ENCODE measurements at regions of chr14 and their contacts with region 1.

Region 1: GRCh38 chr14:96796851-96797581 is at the start of gene VRK1:
- DNase-seq: peak; percentile 90
- ATAC-seq: peak; percentile 100
- H3K4me3 ChIP-seq: peak within 1 kb of the TSS; percentile 73 to 90 (median 84)
- H3K27ac ChIP-seq: peak within 1 kb of the TSS; percentile 74
- H3K4me1 ChIP-seq: peaks cover 34% of the 10 kb centered on the region
- H3K27me3 ChIP-seq: no peaks in the 10 kb centered on the region; a peak in 1 of 5 replicates
- CTCF ChIP-seq: no peak
- EP300 ChIP-seq: peak in 1 of 2 experiments; percentile 17; a peak in 1 of 4 replicates
- POLR2A ChIP-seq: peak; percentile 45 to 63; a peak in 2 of 4 replicates
- RAD21 ChIP-seq: no peak; the same call in 1 of the 2 replicates
- total RNA-seq, gene VRK1: 51.3 and 60.9 TPM in 2 replicates

Region 2: GRCh38 chr14:96741151-96741977 is 55.7 kb before region 1 on chr14:
- CTCF ChIA-PET with region 1: no interaction called
- POLR2A ChIA-PET with region 1: no interaction called
- in situ Hi-C with region 1: no loop called
- intact Hi-C with region 1: no loop called
- DNase-seq: no peak
- ATAC-seq: peak; percentile 85
- H3K4me3 ChIP-seq: peak overlapping the region; percentile 43 to 62 (median 56); a peak in 5 of 6 replicates
- H3K27ac ChIP-seq: no peak overlapping the region
- H3K4me1 ChIP-seq: peaks cover 5% of the 10 kb centered on the region; the same call in 1 of the 2 replicates
- H3K27me3 ChIP-seq: peaks cover 2 to 85% of the 10 kb centered on the region in 2 experiments
- CTCF ChIP-seq: peak; percentile 95
- EP300 ChIP-seq: no peak
- POLR2A ChIP-seq: no peak
- RAD21 ChIP-seq: peak; percentile 86

Region 3: GRCh38 chr14:96852823-96853422 is 55.9 kb after region 1 on chr14:
- CTCF ChIA-PET with region 1: no interaction called
- POLR2A ChIA-PET with region 1: no interaction called
- in situ Hi-C with region 1: no loop called
- intact Hi-C with region 1: loop called (anchors 1 kb)
- DNase-seq: peak; percentile 18
- ATAC-seq: peak; percentile 79
- H3K4me3 ChIP-seq: no peak overlapping the region
- H3K27ac ChIP-seq: no peak overlapping the region
- H3K4me1 ChIP-seq: peaks cover 8% of the 10 kb centered on the region; the same call in 1 of the 2 replicates
- H3K27me3 ChIP-seq: no peaks in the 10 kb centered on the region
- CTCF ChIP-seq: peak; percentile 51
- EP300 ChIP-seq: no peak
- POLR2A ChIP-seq: no peak
- RAD21 ChIP-seq: peak; percentile 33; the same call in 1 of the 2 replicates

Region 4: GRCh38 chr14:97177015-97177414 is 380.0 kb after region 1 on chr14:
- CTCF ChIA-PET with region 1: no interaction called
- POLR2A ChIA-PET with region 1: no interaction called
- in situ Hi-C with region 1: no loop called
- intact Hi-C with region 1: no loop called
- DNase-seq: peak; percentile 18
- ATAC-seq: peak; percentile 67
- H3K4me3 ChIP-seq: no peak overlapping the region
- H3K27ac ChIP-seq: no peak overlapping the region
- H3K4me1 ChIP-seq: no peaks in the 10 kb centered on the region
- H3K27me3 ChIP-seq: peaks cover 0 to 4% of the 10 kb centered on the region in 2 experiments; a peak in 1 of 5 replicates
- CTCF ChIP-seq: peak; percentile 47
- EP300 ChIP-seq: no peak
- POLR2A ChIP-seq: no peak
- RAD21 ChIP-seq: no peak

Region 5: DNA sequence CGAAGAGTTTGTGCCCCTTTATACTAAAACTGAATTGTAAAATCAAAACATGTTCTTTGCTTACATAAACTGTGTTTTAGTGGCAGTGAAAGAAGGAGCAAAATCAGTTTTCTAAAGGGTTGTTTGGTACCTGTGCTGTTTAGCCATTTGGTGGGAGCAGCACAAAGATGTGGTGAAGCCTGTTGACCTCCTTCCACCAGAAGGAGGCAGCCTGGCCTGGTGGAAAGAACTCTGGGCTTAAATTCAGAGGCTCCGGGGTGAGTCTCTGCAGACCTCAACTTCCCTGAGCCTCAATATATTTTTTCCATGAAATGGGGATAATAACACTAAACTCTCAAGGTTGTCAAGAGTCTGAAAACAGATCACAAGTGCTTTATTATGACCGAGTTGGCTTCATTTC is 502.6 kb after region 1 on chr14:
- CTCF ChIA-PET with region 1: no interaction called
- POLR2A ChIA-PET with region 1: no interaction called
- in situ Hi-C with region 1: no loop called
- intact Hi-C with region 1: no loop called
- DNase-seq: no peak
- ATAC-seq: no peak
- H3K4me3 ChIP-seq: no peak overlapping the region
- H3K27ac ChIP-seq: no peak overlapping the region
- H3K4me1 ChIP-seq: no peaks in the 10 kb centered on the region
- H3K27me3 ChIP-seq: no peaks in the 10 kb centered on the region; a peak in 2 of 5 replicates
- CTCF ChIP-seq: peak; percentile 28
- EP300 ChIP-seq: no peak
- POLR2A ChIP-seq: no peak
- RAD21 ChIP-seq: no peak